Gastrocnemius medialis (tissue), 4 donors: ENCODE measurements at regions of chr9 and their contacts with region 1.

Region 1: GRCh38 chr9:76393963-76394679 is at the start of gene RFK:
- DNase-seq: peak; percentile 84 to 86
- ATAC-seq: peak; percentile 86
- H3K4me3 ChIP-seq: peak within 1 kb of the TSS; percentile 75 to 96 (median 84)
- H3K27ac ChIP-seq: peak within 1 kb of the TSS; percentile 83 to 90 (median 88)
- H3K4me1 ChIP-seq: peaks cover 6 to 15% of the 10 kb centered on the region in 2 donors
- H3K27me3 ChIP-seq: no peaks in the 10 kb centered on the region
- CTCF ChIP-seq: peak; percentile 37 to 61 (median 52)
- POLR2A ChIP-seq: peak; percentile 58 to 65
- total RNA-seq, gene RFK: 13.2 to 33.6 (median 25.6) TPM

Region 2: DNA sequence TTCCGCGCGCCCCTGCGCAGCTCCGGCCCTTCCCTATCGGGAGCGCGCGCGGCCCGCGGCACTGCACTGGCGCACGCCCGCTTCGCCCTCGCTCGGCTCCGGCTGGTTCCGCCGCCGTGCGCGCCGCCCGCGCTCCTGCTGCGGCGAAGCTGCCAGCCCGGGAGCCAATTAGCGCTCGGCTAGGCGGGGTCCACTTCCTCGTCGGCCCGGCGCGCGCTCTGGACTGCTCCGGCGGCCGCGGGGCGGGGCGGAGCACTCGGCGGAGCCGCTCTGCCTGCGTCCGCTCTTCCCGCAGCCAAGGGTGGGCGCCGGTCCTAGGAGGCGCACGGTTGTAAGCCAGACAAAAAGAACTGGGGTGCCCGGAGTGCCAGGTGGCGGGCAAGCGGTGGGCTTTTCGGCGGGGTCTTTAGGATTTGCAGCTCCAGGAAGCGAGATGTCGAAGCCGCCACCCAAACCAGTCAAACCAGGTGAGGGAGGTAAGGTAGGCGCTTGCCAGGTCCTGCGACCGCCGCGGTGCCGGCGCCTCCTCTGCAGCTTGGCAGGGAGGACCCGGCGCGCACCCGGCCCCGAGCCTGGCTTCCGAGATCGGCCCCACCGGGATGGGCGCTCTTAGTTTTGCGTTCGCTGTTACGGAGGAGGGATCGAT is 1305.7 kb before region 1 on chr9 and contains the start of gene OSTF1:
- in situ Hi-C with region 1: no loop called
- intact Hi-C with region 1: loop called (anchors 10 kb)
- DNase-seq: peak; percentile 92 to 93
- ATAC-seq: peak; percentile 83 to 84
- H3K4me3 ChIP-seq: peak within 1 kb of the TSS; percentile 84 to 97 (median 94)
- H3K27ac ChIP-seq: peak within 1 kb of the TSS; percentile 89 to 99 (median 94)
- H3K4me1 ChIP-seq: peaks cover 0 to 20% of the 10 kb centered on the region in 2 donors
- H3K27me3 ChIP-seq: no peaks in the 10 kb centered on the region
- CTCF ChIP-seq: no peak
- POLR2A ChIP-seq: peak; percentile 89 to 93
- total RNA-seq, gene OSTF1: 5.2 to 9.8 (median 6.2) TPM

Region 3: GRCh38 chr9:76441551-76442322 is 47.6 kb after region 1 on chr9:
- in situ Hi-C with region 1: loop called in 1 of 4 experiments (anchors 10 kb)
- intact Hi-C with region 1: no loop called
- DNase-seq: no peak
- ATAC-seq: no peak
- H3K4me3 ChIP-seq: no peak overlapping the region
- H3K27ac ChIP-seq: no peak overlapping the region
- H3K4me1 ChIP-seq: no peaks in the 10 kb centered on the region
- H3K27me3 ChIP-seq: no peaks in the 10 kb centered on the region
- CTCF ChIP-seq: no peak
- POLR2A ChIP-seq: no peak

Region 4: DNA sequence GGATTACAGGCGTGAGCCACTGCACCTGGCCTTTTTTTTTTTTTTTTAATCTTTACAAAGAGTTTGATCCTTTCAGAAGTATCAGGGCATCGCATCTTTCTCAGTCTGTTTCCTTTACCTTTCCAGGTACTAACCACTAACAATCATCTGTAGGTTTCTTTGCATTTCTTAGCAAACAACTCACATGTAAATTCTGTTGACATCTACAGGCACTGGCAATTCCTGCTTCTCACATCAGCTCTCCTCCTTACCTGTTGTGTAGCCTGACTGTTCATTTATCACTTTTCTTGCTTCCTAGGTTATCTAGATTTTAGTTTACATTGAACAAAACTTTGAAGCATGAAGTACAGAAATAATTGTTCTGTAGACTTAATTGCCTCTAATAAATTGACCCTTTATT is 755.8 kb after region 1 on chr9:
- in situ Hi-C with region 1: loop called in 2 of 4 experiments (anchors 10 to 25 kb)
- intact Hi-C with region 1: loop called (anchors 2 kb)
- DNase-seq: no peak
- ATAC-seq: no peak
- H3K4me3 ChIP-seq: no peak overlapping the region
- H3K27ac ChIP-seq: no peak overlapping the region
- H3K4me1 ChIP-seq: peaks cover 0 to 7% of the 10 kb centered on the region in 2 donors
- H3K27me3 ChIP-seq: no peaks in the 10 kb centered on the region
- CTCF ChIP-seq: no peak
- POLR2A ChIP-seq: no peak

Region 5: DNA sequence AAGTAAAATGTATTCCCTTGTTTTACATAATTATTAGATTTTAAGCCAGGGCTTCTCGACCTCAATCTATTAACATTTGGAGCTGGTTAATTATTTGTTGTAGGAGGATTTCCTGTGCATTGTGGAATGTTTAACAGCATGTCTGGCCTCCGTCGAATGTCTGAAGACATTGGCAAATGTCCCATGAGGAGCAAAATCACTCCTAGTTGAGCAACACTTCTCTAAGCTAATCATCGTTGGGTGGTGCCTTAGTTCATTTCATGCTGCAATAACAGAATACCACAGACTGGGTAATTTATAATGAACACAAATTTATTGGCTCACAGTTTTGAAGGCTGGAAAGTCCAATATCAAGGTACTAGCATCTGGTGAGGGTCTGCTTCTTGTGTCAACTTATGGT is 769.8 kb after region 1 on chr9:
- in situ Hi-C with region 1: loop called in 2 of 4 experiments (anchors 10 to 25 kb)
- intact Hi-C with region 1: no loop called
- DNase-seq: no peak
- ATAC-seq: no peak
- H3K4me3 ChIP-seq: no peak overlapping the region
- H3K27ac ChIP-seq: peak overlapping the region in 2 of 4 donors; percentile 8 to 31
- H3K4me1 ChIP-seq: peaks cover 15 to 23% of the 10 kb centered on the region in 2 donors
- H3K27me3 ChIP-seq: no peaks in the 10 kb centered on the region
- CTCF ChIP-seq: no peak
- POLR2A ChIP-seq: no peak